Uterus (tissue), 4 donors: ENCODE measurements at regions of chr14 and their contacts with region 1.

Region 1: GRCh38 chr14:58297762-58298476 is 436 bp upstream of the ARID4A start:
- DNase-seq: peak; percentile 99
- H3K4me3 ChIP-seq: peak overlapping the region; percentile 91 to 92
- H3K27ac ChIP-seq: peak overlapping the region; percentile 98 to 99
- H3K4me1 ChIP-seq: peaks cover 0 to 5% of the 10 kb centered on the region in 2 donors
- H3K27me3 ChIP-seq: no peaks in the 10 kb centered on the region
- CTCF ChIP-seq: peak in 1 of 4 experiments; percentile 11
- POLR2A ChIP-seq: peak; percentile 53 to 56

Region 2: DNA sequence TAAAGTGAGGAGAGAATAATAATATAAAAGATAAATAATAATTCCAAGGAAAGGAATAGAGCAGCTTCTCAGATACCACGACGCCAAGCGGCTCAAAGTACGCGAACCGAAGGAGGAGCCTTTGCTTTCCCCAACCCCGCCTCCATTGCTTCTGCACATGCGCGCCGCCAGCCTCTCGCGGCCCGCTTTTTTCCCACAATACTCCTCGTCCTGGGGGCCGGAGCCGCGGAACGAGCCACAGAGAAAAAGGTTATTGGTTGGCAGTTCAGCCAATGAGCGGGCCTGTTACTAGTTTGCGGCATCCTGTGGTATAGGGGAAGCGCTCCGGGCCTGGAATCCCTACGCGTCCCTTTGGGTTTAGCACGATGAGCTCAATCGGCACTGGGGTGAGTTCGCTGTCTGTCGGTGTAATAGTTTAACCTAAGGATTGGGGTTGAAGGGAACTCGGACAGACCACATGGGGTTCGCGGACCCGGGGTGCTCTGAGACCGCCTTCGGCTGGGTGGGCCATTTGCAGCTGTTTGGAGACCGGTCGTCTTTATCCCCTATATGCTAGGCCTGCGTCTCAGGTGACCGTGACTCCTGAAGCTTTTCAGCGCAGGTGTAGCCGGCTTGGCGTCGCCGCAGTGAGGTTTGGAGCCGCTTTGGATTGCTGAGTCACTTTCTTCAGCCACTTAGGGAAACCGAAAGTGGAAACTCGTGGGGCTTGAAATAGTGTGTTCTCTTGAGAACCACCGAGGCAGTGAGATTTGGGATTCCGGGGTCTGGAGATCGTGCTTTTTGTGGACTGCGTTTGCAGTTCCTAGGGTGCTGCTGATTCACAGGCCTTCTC is 53.1 kb before region 1 on chr14 and contains the start of gene PSMA3:
- intact Hi-C with region 1: loop called (anchors 10 kb)
- DNase-seq: peak; percentile 98
- H3K4me3 ChIP-seq: peak within 1 kb of the TSS; percentile 70 to 96
- H3K27ac ChIP-seq: peak within 1 kb of the TSS; percentile 94 to 98
- H3K4me1 ChIP-seq: peaks cover 0 to 10% of the 10 kb centered on the region in 2 donors
- H3K27me3 ChIP-seq: no peaks in the 10 kb centered on the region
- CTCF ChIP-seq: no peak
- POLR2A ChIP-seq: peak; percentile 83 to 85
- total RNA-seq, gene PSMA3: 61.2 to 204 (median 114) TPM